Esophagus muscularis mucosa (tissue), 4 donors: ENCODE measurements at regions of chr7 and their contacts with region 1.

Region 1: DNA sequence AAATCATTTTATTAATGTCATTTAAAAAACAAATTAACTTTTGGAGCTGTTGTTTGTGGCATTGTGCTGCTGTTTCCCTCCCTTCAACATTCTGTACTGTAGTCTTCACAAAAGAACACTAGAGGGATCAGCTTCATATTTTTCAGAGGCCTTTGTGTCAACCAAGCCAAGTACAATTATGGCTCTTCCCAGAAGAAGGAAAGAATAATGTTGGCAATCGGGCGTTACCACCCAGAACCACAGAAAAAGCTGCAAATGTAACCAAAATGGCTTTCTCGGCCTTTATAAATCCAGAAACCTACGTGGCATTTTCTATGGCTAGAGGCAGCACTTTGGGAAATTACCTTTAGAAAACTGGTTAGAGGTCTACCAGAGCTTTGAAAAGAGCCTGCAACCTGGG is 98.8 kb upstream of the COL1A2 start:
- DNase-seq: no peak
- H3K4me3 ChIP-seq: peak overlapping the region in 3 of 4 donors; percentile 17 to 39 (median 39)
- H3K27ac ChIP-seq: peak overlapping the region; percentile 84 to 90 (median 86)
- H3K4me1 ChIP-seq: peaks cover 18 to 53% (median 51%) of the 10 kb centered on the region in 4 donors
- H3K27me3 ChIP-seq: no peaks in the 10 kb centered on the region
- CTCF ChIP-seq: peak; percentile 66 to 81 (median 75)
- EP300 ChIP-seq: no peak
- POLR2A ChIP-seq: no peak

Region 2: GRCh38 chr7:94042381-94042780 is 253.5 kb before region 1 on chr7:
- intact Hi-C with region 1: no loop called
- DNase-seq: no peak
- H3K4me3 ChIP-seq: no peak overlapping the region
- H3K27ac ChIP-seq: no peak overlapping the region
- H3K4me1 ChIP-seq: no peaks in the 10 kb centered on the region
- H3K27me3 ChIP-seq: peaks cover 0 to 11% (median 0%) of the 10 kb centered on the region in 4 donors
- CTCF ChIP-seq: no peak
- EP300 ChIP-seq: no peak
- POLR2A ChIP-seq: no peak

Region 3: DNA sequence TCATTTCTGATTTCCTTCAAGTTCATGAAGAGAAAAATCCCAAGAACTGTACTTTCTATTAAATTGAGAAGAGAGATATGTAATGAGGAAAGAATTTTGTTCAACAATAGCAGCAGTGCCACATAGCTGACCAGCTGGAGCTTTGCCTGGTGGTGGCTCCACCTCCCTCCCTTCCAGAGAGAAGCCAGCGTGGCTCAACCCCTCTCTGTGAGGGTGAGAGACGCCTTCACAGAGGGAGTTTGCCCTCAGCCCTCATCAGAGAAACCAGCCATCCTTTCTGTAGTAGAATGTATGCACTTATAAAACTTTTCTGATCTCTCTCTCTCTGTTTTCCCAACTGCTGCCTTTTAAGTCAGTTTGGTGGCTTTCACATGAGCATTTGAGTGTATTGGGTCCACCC is 78.4 kb after region 1 on chr7:
- intact Hi-C with region 1: loop called (anchors 5 kb)
- DNase-seq: no peak
- H3K4me3 ChIP-seq: peak overlapping the region; percentile 30 to 43 (median 37)
- H3K27ac ChIP-seq: peak overlapping the region; percentile 83 to 90 (median 86)
- H3K4me1 ChIP-seq: peaks cover 17 to 60% (median 44%) of the 10 kb centered on the region in 4 donors
- H3K27me3 ChIP-seq: no peaks in the 10 kb centered on the region
- CTCF ChIP-seq: peak in 2 of 3 experiments; percentile 8 to 33
- EP300 ChIP-seq: no peak
- POLR2A ChIP-seq: no peak

Region 4: DNA sequence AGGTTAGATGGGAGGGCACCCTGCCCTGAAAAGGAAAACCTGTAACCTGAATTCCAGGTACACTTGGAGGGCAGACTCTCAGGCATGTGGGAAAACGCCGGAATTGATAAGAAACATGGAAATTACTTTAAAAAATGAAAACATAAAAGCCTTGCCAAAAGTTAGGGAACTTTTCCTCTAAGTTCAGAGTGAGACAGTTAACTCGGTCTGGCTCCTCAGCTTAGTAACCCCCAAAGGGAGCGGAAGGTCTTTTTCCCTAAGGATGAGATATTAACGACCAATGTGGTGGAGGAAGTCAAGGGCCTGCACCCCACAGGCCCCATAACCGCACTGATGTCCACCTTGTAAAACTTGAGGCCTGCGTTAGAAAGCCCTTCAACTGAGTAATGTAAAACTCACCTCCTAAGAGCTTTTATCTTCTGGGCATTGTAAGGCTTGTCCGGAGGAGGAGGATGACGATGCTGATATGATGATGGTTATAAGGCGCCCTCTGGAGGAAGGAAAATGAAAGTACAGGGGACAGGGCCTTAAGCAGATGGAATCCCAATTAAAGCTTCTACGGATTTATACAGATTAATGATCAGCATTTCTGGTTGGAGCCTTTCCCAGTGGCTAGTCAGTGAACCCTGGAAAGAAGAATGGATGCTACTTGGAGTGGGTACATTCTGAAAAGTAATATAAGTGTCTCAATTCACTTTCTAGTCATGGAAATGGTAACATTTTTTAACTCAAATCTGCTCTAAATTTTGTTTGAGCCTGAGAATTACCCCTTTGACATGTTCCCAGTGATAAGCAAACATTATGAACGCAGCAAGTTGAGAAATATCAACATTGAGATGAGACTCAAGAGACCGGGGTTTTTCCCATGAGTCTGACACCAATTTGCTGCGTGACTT is 99.5 kb after region 1 on chr7:
- intact Hi-C with region 1: loop called (anchors 1 kb)
- DNase-seq: no peak
- H3K4me3 ChIP-seq: peak overlapping the region; percentile 69 to 85 (median 72)
- H3K27ac ChIP-seq: peak overlapping the region; percentile 91 to 97 (median 95)
- H3K4me1 ChIP-seq: peaks cover 14 to 73% (median 61%) of the 10 kb centered on the region in 4 donors
- H3K27me3 ChIP-seq: no peaks in the 10 kb centered on the region
- CTCF ChIP-seq: peak; percentile 85 to 92 (median 90)
- EP300 ChIP-seq: no peak
- POLR2A ChIP-seq: no peak

Region 5: DNA sequence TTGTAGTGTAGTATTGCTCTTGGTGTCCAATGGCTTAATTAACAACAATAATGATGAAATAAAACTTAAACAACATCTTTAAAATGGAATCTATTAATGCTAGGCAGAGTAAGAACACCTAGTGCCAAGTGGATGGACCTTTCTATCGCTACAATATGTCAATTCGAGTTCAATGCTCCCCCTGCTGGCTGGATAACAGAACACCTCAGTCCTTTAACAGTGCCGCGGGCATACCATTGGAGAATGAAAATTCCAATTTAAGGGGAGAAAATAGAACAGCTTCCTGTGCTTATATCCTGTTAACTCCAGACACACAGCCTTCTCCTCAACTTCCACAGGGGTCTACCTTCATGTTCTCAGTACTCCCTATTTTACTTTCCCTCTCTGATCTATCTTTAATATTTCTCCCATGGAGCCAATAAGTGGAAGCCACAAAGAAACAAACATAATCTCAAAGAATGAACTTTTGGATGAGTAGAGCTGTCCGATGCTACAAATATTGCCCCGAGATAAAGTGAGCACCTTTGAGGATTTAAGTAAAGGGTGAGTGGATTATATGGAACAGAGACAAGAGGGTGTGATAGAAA is 140.3 kb after region 1 on chr7:
- intact Hi-C with region 1: loop called (anchors 2 kb)
- DNase-seq: no peak
- H3K4me3 ChIP-seq: no peak overlapping the region
- H3K27ac ChIP-seq: no peak overlapping the region
- H3K4me1 ChIP-seq: peaks cover 0 to 8% (median 3%) of the 10 kb centered on the region in 4 donors
- H3K27me3 ChIP-seq: no peaks in the 10 kb centered on the region
- CTCF ChIP-seq: peak; percentile 73 to 83 (median 73)
- EP300 ChIP-seq: no peak
- POLR2A ChIP-seq: no peak

Region 6: GRCh38 chr7:94994016-94994415 is 698.2 kb after region 1 on chr7:
- intact Hi-C with region 1: no loop called
- DNase-seq: no peak
- H3K4me3 ChIP-seq: no peak overlapping the region
- H3K27ac ChIP-seq: no peak overlapping the region
- H3K4me1 ChIP-seq: peaks cover 0 to 17% (median 16%) of the 10 kb centered on the region in 4 donors
- H3K27me3 ChIP-seq: no peaks in the 10 kb centered on the region
- CTCF ChIP-seq: no peak
- EP300 ChIP-seq: no peak
- POLR2A ChIP-seq: no peak